CD8-positive, alpha-beta memory T cell (primary cell): ENCODE measurements at regions of chr2 and their contacts with region 1.

Region 1: GRCh38 chr2:222903234-222904220 is 42.7 kb downstream of the ACSL3 start:
- DNase-seq: peak in 4 of 5 donors; percentile 4 to 48 (median 22)
- H3K4me3 ChIP-seq: no peak overlapping the region
- H3K4me3 Mint-ChIP-seq: peak overlapping the region in 1 of 7 donors; percentile 1
- H3K27ac ChIP-seq: no peak overlapping the region
- H3K27ac Mint-ChIP-seq: peak overlapping the region in 1 of 8 donors; percentile 39
- H3K4me1 ChIP-seq: no peaks in the 10 kb centered on the region
- H3K4me1 Mint-ChIP-seq: peaks cover 20 to 45% (median 31%) of the 10 kb centered on the region in 3 donors
- H3K27me3 ChIP-seq: no peaks in the 10 kb centered on the region
- H3K27me3 Mint-ChIP-seq: no peaks in the 10 kb centered on the region

Region 2: GRCh38 chr2:222707689-222708525 is 195.6 kb before region 1 on chr2:
- CTCF ChIA-PET with region 1: interaction called, 28 read pairs
- POLR2A ChIA-PET with region 1: no interaction called
- DNase-seq: peak; percentile 49 to 77 (median 58)
- H3K4me3 ChIP-seq: no peak overlapping the region
- H3K4me3 Mint-ChIP-seq: no peak overlapping the region
- H3K27ac ChIP-seq: no peak overlapping the region
- H3K27ac Mint-ChIP-seq: no peak overlapping the region
- H3K4me1 ChIP-seq: no peaks in the 10 kb centered on the region
- H3K4me1 Mint-ChIP-seq: no peaks in the 10 kb centered on the region
- H3K27me3 ChIP-seq: peaks cover 6% of the 10 kb centered on the region
- H3K27me3 Mint-ChIP-seq: peaks cover 27 to 68% of the 10 kb centered on the region in 2 donors